BJ (cell line): ENCODE measurements at regions of chr6 and their contacts with region 1.

Region 1: GRCh38 chr6:113461153-113461932 is 395.8 kb upstream of the MARCKS start:
- DNase-seq: no peak
- H3K4me3 ChIP-seq: no peak overlapping the region
- H3K27me3 ChIP-seq: no peaks in the 10 kb centered on the region
- CTCF ChIP-seq: peak; percentile 22; the same call in 1 of the 2 replicates

Region 2: DNA sequence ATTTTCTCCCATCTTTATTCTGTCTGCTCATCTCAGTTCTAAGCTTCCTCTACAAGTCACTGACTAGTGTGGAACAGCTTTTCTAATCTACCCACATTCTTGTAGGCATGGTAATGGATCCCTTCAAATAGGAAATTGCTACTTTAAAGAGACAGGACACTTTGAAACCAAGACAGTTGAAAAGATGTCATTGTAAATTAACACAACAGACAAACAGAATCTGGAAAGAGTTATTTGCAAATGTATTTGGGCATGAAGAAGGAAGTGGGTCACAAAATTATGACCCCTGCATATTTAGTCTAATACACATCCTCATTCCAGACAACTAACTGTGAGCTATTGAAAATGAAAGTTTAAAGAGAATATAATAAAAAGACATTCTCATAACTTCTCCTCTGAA is 97.6 kb after region 1 on chr6:
- CTCF ChIA-PET with region 1: no interaction called
- POLR2A ChIA-PET with region 1: no interaction called
- DNase-seq: peak; percentile 54
- H3K4me3 ChIP-seq: no peak overlapping the region
- H3K27me3 ChIP-seq: no peaks in the 10 kb centered on the region
- CTCF ChIP-seq: no peak

Region 3: DNA sequence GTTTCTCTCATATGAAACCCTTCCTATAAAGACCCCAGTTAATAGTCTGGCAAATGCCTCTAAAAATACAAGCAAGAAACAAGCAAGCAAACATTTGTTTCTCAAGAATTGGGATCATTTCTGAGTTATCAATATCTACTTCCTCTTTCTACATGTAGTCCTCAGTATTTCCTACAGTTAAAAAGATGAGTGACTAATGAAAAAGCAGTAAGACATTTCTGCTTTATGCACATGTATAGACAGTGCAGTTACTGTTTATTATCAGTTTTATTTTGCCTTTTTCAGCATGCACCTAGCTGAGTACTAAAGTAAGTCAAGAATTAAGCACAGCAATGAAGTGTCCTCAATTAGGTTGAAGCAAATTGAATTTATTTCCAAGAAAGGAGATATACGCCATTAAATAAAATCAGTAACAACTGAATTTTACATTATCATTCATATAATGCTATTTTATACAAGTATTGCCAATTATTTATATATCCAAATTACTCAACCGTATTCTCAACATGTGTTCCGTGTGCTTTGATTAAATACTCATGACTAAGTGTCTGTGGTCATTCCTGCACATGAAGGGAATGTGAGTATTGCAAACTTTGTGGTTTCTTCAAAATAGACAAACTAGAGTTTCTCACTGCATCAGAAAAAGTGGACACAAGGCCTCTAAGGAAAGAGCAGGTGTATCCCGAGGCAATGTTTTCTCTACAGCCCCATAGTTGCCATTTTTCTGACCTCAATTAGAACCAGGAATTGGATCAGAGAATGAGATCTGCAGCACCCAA is 236.5 kb after region 1 on chr6:
- CTCF ChIA-PET with region 1: no interaction called
- POLR2A ChIA-PET with region 1: interaction called, 11 read pairs
- DNase-seq: peak; percentile 86
- H3K4me3 ChIP-seq: no peak overlapping the region
- H3K27me3 ChIP-seq: no peaks in the 10 kb centered on the region
- CTCF ChIP-seq: no peak